ENCODE measurements at regions of chr9 and their contacts with region 1.

Region 1: DNA sequence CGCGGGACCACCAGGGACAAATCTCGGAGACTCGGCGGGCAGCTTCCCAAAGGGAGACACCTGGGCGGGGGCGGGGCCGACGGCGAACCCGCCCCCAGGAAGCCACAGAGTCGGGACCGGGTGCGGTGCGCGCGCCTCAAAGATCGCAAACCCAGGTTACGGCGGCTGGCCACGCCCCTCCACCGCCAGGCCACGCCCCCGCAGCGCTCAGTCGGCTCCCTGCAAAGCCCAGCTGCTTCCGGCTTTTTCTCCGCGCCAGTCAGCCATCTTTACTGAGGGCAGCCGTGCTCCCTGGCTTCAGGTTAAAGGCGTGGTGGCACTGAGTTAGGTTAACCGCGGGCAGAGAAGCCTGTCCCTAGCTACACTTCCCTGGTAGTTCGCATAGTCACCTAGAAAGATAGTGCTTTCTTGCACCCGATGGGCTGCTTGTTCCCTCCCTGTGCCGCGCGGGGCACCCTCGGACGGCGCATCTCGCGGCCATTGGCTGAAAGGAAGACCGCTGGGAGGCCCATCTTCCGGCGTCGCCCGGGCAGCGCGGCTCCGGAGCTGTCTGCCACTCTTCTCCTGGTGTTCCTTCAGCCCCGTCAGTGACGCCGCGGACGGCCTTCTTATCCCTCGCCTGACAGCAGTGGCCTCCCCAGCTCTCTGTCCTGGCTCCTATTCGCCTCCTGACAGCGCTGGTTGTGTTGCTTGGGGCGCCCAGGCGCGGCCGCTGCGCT is at the start of gene TBC1D2:
- DNase-seq: peak; percentile 98
- H3K4me3 Mint-ChIP-seq: peak within 1 kb of the TSS; percentile 85
- H3K27ac Mint-ChIP-seq: peak within 1 kb of the TSS; percentile 95
- H3K4me1 Mint-ChIP-seq: peaks cover 32% of the 10 kb centered on the region
- H3K27me3 Mint-ChIP-seq: no peaks in the 10 kb centered on the region
- total RNA-seq, gene TBC1D2: 5.2 to 5.3 TPM

Region 2: DNA sequence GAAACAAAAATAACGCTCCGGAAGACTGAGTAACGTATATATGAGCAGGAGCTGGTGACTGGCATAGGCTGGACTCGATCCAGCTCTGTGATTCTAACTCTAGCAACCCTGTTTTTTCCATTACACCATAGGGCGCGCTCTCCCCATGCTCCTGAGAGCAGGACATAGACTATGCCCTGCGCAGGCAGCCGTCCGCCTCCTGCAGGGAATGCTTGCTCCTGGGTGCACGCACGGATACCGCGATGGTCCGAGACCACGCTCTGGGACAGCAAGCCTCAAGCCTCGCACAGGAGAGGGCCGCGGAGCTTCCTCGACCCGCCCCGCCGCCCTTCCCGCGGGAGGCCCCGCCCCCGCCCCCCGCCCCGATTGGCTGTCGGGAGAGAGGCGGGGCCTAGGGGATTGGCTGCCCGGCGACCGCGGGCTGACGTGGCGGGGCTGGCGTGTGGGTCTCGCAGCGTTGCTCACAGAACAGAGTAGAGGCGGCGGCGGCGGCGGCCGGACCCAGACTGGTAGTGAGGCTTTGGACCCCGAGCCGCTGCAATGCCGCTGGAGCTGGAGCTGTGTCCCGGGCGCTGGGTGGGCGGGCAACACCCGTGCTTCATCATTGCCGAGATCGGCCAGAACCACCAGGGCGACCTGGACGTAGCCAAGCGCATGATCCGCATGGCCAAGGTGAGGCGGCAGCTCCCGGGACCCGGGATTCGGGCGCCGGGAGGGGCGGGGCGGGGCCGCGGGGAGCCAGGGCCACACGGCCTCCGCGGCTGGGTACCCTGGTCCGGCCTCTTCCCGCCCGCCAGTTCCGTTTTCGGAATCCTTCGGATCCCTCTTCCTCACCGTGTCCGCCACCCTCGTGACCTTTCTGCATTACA is 199.2 kb before region 1 on chr9 and contains the start of gene NANS:
- CTCF ChIA-PET with region 1: interaction called, 7 read pairs
- POLR2A ChIA-PET with region 1: interaction called, 23 read pairs
- intact Hi-C with region 1: loop called (anchors 2 kb)
- DNase-seq: peak; percentile 95
- H3K4me3 Mint-ChIP-seq: peak within 1 kb of the TSS; percentile 92
- H3K27ac Mint-ChIP-seq: peak within 1 kb of the TSS; percentile 91
- H3K4me1 Mint-ChIP-seq: peaks cover 19% of the 10 kb centered on the region
- H3K27me3 Mint-ChIP-seq: no peaks in the 10 kb centered on the region
- total RNA-seq, gene NANS: 48.4 to 51.9 TPM

Region 3: DNA sequence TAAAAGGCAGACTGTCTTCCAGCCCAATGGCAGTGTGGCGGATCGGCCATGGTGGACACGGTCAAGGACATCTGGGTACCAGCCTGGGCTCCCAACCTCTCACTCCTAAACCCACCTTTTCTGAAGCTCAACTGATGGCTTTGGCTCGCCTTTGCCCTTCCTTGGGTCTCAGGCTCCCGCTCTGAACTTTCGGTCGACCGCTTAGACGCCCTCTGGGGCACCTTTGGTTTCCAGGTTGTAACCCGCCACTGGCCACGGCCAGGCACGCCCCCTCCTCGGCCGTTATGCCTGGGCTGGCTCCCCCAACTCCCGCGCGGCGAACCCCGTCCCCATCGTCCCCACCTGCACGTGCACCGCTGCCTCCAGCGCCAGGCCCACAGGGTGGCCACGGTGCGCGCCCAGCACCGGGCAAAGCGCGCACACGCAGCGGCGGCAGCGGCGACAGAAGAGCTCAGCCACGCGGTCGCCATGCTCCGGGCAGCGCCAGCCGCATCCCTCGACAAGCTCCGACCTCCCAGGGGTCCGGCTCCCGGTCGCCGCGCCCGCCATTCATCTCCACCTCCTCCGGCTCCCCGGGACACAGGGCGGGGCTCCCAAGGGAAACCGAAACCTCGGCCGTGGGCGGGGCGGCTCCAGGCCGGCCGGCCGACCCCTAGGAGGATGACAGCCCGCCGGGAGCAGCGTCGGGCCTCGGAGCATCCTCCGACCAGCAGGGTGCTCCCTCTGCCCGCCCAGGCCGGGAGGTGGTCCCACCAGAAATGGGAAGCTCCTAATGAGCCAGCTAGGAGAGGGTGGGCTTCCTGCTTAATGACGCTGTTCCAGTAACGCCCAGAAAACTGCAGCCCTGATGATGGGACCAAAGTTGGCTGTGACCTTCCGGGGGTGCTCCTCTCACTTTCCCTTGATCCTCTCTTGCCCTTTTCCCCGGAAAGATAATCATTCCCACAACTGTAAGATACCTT is 136.8 kb before region 1 on chr9 and contains the start of gene TRIM14:
- CTCF ChIA-PET with region 1: interaction called, 22 read pairs
- POLR2A ChIA-PET with region 1: interaction called, 7 read pairs
- intact Hi-C with region 1: loop called (anchors 2 kb)
- DNase-seq: peak; percentile 75
- H3K4me3 Mint-ChIP-seq: peak within 1 kb of the TSS; percentile 89
- H3K27ac Mint-ChIP-seq: peak within 1 kb of the TSS; percentile 95
- H3K4me1 Mint-ChIP-seq: peaks cover 39% of the 10 kb centered on the region
- H3K27me3 Mint-ChIP-seq: no peaks in the 10 kb centered on the region
- total RNA-seq, gene TRIM14: 49.1 to 52.7 TPM

Region 4: DNA sequence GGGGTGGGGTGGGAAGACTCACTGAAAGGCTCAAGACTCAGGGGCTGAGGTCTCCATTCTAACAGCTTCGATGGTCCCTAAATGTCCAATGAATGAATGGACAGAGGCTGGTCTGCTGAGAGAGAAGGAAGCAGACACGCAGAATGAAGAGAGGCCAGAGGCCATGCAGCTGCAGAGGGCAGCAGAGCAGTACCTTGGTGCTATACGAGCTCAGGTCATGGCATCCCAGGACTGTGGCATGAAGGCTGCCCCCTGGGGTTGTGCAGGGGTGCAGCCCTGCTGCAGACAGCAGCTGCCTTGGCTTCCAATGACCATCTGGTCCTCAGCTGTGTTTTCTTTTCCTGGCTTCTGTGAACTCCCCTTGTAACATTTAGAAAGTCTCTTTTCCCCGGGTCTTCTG is 48.1 kb before region 1 on chr9:
- CTCF ChIA-PET with region 1: interaction called, 21 read pairs
- POLR2A ChIA-PET with region 1: interaction called, 4 read pairs
- intact Hi-C with region 1: loop called (anchors 2 kb)
- DNase-seq: no peak
- H3K4me3 Mint-ChIP-seq: no peak overlapping the region
- H3K27ac Mint-ChIP-seq: no peak overlapping the region
- H3K4me1 Mint-ChIP-seq: peaks cover 2% of the 10 kb centered on the region
- H3K27me3 Mint-ChIP-seq: no peaks in the 10 kb centered on the region

Region 5: DNA sequence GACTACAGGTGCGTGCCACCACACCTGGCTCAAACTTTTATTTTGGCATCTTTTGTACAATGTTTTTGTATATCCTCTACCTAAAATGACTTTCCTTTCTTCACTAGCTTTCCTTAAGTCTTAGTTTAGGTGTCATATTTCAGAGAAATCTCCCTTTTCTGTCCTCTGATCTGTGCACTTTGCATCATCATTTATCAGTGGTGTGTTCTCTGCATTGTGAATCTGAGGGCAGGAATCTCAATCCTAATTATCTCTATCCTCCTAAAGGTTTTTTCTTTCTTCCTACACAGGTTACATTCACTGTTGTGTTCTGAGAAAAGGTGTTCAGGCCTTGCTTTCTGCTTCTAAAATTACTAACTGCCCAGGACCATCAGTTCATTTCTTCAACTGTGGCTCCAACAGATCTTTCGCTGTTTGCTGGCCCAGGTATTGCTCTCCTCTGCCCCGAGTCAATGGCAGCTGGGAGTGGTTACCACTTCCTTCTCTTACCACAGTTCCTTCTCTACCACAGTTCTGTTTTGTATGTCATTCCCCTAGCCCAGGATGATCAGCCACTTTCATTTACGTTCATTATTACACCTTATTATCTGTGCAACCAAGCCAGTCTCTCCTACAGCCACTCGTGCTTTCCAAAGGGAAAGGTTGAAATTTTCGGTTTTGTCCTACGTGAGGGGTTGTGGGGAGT is 863.2 kb after region 1 on chr9:
- CTCF ChIA-PET with region 1: no interaction called
- POLR2A ChIA-PET with region 1: no interaction called
- intact Hi-C with region 1: loop called (anchors 10 kb)
- DNase-seq: peak; percentile 75
- H3K4me3 Mint-ChIP-seq: peak overlapping the region; percentile 61
- H3K27ac Mint-ChIP-seq: peak overlapping the region; percentile 88
- H3K4me1 Mint-ChIP-seq: peaks cover 77% of the 10 kb centered on the region
- H3K27me3 Mint-ChIP-seq: no peaks in the 10 kb centered on the region

Measured in activated CD4-positive, alpha-beta memory T cell treated with anti-CD3 and anti-CD28 coated beads for 36 hours (primary cell).